Panc1 (cell line): ENCODE measurements at regions of chr4 and their contacts with region 1.

Region 1: DNA sequence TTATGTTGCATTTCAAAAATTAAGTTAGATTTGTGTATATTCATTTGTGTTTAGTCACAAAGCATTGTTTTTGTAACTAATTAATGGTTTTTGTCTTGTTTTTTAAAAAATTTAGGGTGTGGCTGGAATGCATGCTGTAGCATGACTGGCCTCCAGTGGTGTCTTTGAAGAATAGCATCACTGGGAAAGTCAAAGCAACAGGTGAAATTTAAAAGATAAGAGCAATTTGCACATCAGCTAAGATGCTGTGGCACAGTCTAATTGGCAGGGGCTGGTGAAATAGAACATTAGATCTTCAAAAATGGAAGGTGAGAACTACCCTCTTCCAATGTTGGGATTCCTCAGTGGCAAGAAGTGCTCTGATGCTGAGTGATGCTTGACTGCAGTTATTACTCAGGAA is 45.3 kb downstream of the ANK2 start:
- DNase-seq: no peak
- ATAC-seq: no peak
- H3K4me3 ChIP-seq: no peak overlapping the region
- H3K27ac ChIP-seq: no peak overlapping the region
- H3K4me1 ChIP-seq: no peaks in the 10 kb centered on the region
- H3K27me3 ChIP-seq: no peaks in the 10 kb centered on the region
- CTCF ChIP-seq: peak; percentile 69

Region 2: DNA sequence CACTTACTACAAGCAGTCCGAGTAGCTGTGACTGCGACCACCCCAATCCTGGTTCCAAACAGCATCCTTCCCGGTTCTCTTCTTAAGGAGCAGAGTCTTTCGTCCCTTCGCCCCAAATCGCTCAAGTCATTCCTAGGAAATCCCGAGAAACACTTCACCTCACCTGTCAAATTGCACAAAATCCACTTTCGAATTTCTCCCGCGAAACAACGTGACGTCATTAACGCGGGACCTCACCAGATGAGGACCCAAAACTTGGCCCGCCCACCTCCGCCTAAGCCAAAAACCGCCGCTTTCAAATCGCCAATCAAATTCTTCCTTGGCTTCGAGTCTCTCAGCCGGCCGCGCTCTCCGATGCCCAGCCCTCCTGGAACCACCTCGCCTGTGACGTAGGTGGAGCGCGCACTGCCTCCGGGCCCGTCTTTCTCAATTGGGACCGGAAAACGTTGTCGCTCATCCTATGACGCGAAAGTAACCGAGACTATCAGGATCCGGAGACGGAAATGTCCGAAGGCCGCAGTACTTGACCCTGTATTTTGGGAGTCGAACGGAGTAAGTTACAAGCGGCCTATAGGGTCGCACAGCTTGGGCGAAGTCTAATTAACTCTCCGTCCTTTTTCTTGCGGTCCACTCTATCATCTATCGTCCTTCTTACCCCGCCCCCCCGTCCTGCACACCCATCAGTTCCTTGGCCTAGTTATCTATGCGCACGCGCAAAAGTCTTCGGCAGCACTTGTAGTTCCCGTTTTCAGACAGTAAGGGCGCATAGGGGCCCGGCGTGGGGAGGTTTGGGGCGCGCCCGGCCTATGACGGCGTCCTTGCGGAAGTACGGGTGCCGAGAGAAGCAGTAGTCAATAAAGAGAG is 457.9 kb before region 1 on chr4 and contains the starts of genes LARP7 and ZGRF1:
- CTCF ChIA-PET with region 1: no interaction called
- POLR2A ChIA-PET with region 1: no interaction called
- in situ Hi-C with region 1: no loop called
- intact Hi-C with region 1: loop called (anchors 10 kb)
- DNase-seq: peak; percentile 92
- ATAC-seq: peak; percentile 98
- H3K4me3 ChIP-seq: peak within 1 kb of the TSS; percentile 92 to 98
- H3K27ac ChIP-seq: peak within 1 kb of the TSS; percentile 96
- H3K4me1 ChIP-seq: peaks cover 3% of the 10 kb centered on the region; the same call in 1 of the 2 replicates
- H3K27me3 ChIP-seq: no peaks in the 10 kb centered on the region
- CTCF ChIP-seq: peak; percentile 73
- total RNA-seq, gene LARP7: 21.7 TPM
- total RNA-seq, gene ZGRF1: 7.4 TPM

Region 3: DNA sequence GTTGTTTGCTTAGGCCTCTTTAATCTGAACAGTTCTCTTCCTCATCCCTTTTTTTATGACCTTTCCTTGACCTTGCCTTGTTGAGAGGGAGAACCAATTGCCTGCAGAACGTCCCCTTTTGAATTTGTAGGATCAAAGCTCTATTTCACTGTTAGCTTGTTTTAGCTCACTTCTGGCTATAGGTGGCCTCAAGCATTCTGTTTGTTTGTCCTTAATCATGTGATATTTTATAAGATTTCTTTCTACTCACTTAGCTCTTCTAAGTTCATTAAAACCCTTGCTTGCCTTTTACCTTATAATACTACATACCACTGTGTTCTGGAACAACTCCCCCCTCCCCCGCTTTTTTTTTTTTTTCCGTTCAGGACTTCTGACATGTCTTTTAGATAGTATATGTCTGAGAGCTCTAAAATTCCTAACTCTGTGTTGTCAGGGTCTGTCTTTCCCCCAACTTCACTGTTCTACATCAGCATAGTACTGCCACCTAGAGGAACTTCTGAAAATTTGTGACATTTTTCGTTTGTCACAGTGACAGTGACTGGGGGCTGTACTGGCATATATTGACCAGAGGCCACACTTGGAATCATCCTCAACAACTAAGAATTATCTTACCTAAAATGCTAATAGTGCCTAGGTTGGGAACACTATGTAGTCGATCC is 329.4 kb before region 1 on chr4:
- CTCF ChIA-PET with region 1: no interaction called
- POLR2A ChIA-PET with region 1: no interaction called
- in situ Hi-C with region 1: no loop called
- intact Hi-C with region 1: loop called (anchors 10 kb)
- DNase-seq: no peak
- ATAC-seq: peak; percentile 66; the same call in 1 of the 2 replicates
- H3K4me3 ChIP-seq: no peak overlapping the region
- H3K27ac ChIP-seq: no peak overlapping the region
- H3K4me1 ChIP-seq: no peaks in the 10 kb centered on the region
- H3K27me3 ChIP-seq: no peaks in the 10 kb centered on the region
- CTCF ChIP-seq: peak; percentile 56